ENCODE measurements at regions of chr4 and their contacts with region 1.

Region 1: DNA sequence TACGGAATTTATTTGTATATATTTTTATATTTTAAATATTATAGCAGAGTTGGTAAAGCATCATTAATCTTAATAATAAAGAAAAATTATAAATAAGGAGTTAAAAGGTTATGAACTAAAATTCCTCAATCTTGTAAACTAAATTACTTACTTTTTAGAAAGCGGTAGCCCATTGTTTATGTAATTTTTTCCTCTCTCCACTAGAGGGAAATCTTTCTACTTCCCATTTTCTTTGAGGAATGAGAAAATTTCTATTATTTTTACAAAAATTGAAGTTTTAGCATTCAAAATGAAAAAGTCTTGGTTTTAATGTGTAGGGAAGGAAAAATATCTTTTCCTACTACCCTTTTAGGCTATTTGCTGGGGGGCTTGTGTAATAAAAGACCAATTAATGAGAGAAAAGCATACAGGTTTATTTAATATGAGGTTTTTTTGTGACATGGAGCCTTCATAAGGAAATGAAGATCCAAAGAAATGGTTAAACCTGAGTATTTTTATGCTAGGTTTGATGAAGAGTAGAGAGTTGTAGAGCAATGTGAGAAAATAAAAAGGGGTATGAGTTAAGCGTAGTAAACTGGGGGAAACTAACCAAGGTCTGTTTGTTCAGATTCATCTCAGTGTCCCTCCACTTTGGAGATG is 68.7 kb upstream of the ADAD1 start:
- DNase-seq: no peak

Region 2: GRCh38 chr4:122276359-122276758 is 33.7 kb before region 1 on chr4:
- intact Hi-C with region 1: no loop called
- DNase-seq: no peak

Region 3: GRCh38 chr4:122562449-122562848 is 252.3 kb after region 1 on chr4:
- intact Hi-C with region 1: no loop called
- DNase-seq: no peak

Region 4: GRCh38 chr4:122577808-122578781 is 268.0 kb after region 1 on chr4:
- intact Hi-C with region 1: loop called (anchors 5 kb)
- DNase-seq: no peak